HEK293 (cell line): ENCODE measurements at regions of chr19 and their contacts with region 1.

Region 1: GRCh38 chr19:45485305-45486077 is 11.4 kb downstream of the RTN2 start:
- H3K4me3 ChIP-seq: peak overlapping the region; percentile 53
- H3K27ac ChIP-seq: peak overlapping the region; percentile 53; the same call in 1 of the 2 replicates
- H3K4me1 ChIP-seq: peaks cover 2% of the 10 kb centered on the region; the same call in 1 of the 2 replicates
- CTCF ChIP-seq: peak; percentile 89

Region 2: GRCh38 chr19:45405435-45406225 is 79.9 kb before region 1 on chr19:
- CTCF ChIA-PET with region 1: interaction called, 42 read pairs
- POLR2A ChIA-PET with region 1: interaction called, 5 read pairs
- H3K4me3 ChIP-seq: peak overlapping the region; percentile 82
- H3K27ac ChIP-seq: peak overlapping the region; percentile 96
- H3K4me1 ChIP-seq: 0 out of 2 replicates have a peak, but pooled peaks cover 7% of the 10 kb centered on the region
- CTCF ChIP-seq: no peak

Region 3: DNA sequence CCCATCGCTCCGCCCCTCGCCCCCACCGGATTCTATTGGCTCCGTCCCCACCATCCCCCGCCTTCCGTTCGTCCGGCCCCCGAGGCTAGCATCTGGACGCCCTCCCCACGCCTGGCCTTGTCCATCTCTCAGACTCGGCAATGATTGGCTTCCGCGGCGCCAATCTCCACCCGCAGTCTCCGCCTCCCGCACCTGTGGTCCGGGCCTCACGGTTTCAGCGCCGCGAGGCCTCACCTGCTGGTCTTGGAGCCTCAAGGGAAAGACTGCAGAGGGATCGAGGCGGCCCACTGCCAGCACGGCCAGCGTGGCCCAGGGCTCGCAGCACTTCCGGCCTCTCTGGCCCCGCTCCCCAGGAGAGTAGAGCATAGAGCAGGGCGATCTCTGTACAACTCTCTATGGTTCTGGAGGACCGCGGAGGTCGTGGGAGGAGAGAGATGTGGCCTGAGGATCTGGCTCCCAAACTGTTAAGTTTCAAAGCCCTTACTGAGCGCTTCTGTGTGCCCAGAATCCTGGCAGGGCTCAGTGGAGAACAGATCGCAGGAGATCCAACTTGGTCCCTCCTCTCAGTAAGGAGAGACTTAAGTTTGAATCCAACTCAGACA is 61.8 kb before region 1 on chr19 and contains the start of gene ERCC1:
- CTCF ChIA-PET with region 1: interaction called, 18 read pairs
- POLR2A ChIA-PET with region 1: no interaction called
- H3K4me3 ChIP-seq: peak within 1 kb of the TSS; percentile 50
- H3K27ac ChIP-seq: peak within 1 kb of the TSS; percentile 88
- H3K4me1 ChIP-seq: peaks cover 10% of the 10 kb centered on the region
- CTCF ChIP-seq: no peak

Region 4: DNA sequence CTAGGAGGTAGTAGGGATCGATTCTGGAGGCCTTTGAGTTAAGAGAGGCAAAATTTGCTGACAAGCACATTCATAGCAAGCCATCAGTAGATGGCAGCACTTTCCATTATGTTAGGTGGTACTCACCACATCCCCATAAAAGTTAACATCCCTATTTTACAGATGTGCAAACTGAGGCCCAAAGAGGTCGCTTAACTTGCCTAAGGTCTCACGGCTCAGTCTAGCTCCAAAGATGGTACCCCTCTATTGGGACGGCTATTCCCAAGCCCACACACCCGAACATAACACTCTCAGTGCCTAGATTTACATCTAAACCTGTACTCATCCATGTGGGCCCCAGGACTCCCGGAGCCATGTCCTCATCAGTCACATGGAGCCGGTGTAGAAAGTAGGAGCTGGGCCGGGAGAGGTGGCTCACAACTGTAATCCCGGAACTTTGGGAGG is 39.1 kb before region 1 on chr19:
- CTCF ChIA-PET with region 1: interaction called, 295 read pairs
- POLR2A ChIA-PET with region 1: no interaction called
- H3K4me3 ChIP-seq: no peak overlapping the region
- H3K27ac ChIP-seq: no peak overlapping the region
- H3K4me1 ChIP-seq: 0 out of 2 replicates have a peak, but pooled peaks cover 8% of the 10 kb centered on the region
- CTCF ChIP-seq: no peak; the same call in 1 of the 2 replicates

Region 5: DNA sequence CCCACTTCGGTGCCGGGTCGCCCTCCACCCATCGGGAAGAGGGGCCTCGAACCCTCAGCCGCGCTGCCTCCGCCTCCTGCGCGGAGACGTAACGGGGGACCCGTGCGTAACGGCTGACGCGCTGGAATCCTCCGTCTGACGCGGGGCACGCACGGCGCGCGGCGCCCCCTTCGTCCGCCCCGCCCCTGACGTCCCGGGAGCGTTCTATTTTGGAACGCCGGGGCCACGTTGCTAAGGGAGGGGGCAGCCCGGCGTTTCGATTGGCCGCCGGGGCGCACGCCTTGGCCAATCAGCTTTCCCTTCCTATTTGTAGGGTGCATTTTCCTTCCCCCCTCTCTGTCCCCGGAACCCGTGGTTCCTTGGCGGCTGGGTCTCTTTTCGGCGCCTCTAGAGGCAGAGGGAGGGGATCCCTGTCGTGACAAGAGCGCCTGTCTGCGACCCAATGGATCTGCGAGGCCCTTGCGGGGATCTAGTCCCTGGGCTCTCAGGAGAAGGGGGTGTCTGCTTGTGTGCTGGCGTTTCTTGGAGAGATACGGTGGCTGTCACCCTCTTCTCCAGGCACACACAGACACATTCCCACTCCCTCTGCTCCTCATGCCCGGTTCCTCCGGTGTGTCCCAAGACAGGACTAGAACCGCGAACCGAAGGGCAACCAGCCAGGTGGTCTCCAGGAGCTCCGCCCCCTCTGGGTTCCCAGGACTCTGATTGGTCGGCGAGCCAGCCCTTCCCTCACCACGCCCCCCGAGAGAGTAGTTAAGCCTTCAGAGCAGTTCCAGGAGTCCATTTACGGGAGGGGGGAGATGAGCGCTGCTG is 16.2 kb before region 1 on chr19:
- CTCF ChIA-PET with region 1: interaction called, 30 read pairs
- POLR2A ChIA-PET with region 1: interaction called, 8 read pairs
- H3K4me3 ChIP-seq: peak overlapping the region; percentile 65
- H3K27ac ChIP-seq: peak overlapping the region; percentile 45
- H3K4me1 ChIP-seq: peaks cover 5% of the 10 kb centered on the region; the same call in 1 of the 2 replicates
- CTCF ChIP-seq: peak; percentile 6; the same call in 1 of the 2 replicates

Region 6: DNA sequence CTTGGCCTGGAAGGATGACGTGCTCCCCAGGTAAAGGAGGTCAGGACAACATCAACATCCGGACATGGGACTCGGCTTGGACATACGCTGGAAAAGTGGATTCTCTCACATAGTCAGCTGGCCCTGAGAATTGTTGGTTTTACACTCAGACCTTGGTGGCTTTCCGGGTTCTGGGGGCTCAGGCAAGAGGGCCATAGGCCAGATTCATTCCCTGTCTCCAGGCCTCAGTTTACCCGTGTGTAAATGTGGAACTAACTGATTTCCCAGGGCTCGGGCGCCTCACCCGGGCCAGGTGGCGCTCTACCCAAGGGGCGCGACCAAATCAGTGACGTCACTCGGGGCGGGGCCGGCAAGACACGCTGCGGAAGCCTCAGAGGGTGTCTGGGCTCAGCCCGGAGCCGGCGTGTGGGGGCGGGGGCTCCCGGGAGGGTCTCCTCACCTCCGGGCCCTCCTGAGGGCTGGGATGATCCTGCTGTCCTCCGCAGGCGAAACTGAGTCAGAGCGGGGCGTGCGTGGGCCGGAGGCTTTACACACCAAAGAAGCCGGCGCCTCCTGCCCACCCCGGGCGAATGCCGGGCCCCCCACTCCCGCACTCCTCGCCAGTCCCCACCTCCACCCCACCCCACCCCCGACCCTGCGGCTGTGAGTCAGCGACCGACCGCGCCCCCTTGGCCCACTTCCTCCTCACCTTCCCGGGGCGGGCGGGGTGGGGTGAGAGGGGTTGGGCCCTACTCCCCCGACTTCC is 20.9 kb after region 1 on chr19:
- CTCF ChIA-PET with region 1: interaction called, 19 read pairs
- POLR2A ChIA-PET with region 1: interaction called, 4 read pairs
- H3K4me3 ChIP-seq: peak overlapping the region; percentile 87
- H3K27ac ChIP-seq: peak overlapping the region; percentile 67
- H3K4me1 ChIP-seq: peaks cover 15% of the 10 kb centered on the region
- CTCF ChIP-seq: peak; percentile 94